ENCODE measurements at regions of chr6 and their contacts with region 1.

Region 1: DNA sequence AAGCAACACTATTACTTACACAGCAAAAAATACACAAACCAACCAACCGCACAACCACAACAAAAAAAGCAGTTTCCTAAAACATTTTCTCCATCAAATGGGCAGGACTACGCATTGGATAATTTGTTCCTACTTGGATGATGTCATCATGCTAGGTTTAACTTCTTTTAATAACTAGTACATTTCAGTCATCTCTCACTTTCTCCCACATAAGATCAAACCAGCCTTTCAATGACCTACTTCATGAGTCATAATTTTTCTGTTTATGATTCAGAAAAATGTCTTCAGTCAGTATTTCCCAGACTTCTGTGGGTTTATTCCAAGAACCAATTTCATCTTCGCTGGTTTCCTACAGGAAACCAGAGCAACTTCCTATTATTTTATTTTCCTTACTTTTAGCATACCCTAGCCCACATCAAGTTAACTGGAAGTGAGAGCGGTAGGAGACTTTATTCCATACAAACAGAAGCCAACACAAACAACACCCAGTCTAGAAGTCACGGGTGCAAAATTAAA is 134.2 kb downstream of the GMDS start:
- DNase-seq: no peak
- H3K4me3 ChIP-seq: peak overlapping the region in 1 of 2 donors; percentile 49
- H3K27ac ChIP-seq: peak overlapping the region; percentile 82 to 83
- H3K4me1 ChIP-seq: peaks cover 0 to 20% of the 10 kb centered on the region in 2 donors
- H3K27me3 ChIP-seq: no peaks in the 10 kb centered on the region
- CTCF ChIP-seq: no peak

Region 2: GRCh38 chr6:683742-684440 is 1427.3 kb before region 1 on chr6:
- intact Hi-C with region 1: no loop called
- DNase-seq: no peak
- H3K4me3 ChIP-seq: peak overlapping the region in 1 of 2 donors; percentile 38
- H3K27ac ChIP-seq: no peak overlapping the region
- H3K4me1 ChIP-seq: peaks cover 0 to 3% of the 10 kb centered on the region in 2 donors
- H3K27me3 ChIP-seq: no peaks in the 10 kb centered on the region
- CTCF ChIP-seq: no peak

Region 3: GRCh38 chr6:2147766-2148448 is 36.7 kb after region 1 on chr6:
- intact Hi-C with region 1: loop called (anchors 2 kb)
- DNase-seq: no peak
- H3K4me3 ChIP-seq: peak overlapping the region in 1 of 2 donors; percentile 27
- H3K27ac ChIP-seq: peak overlapping the region in 1 of 2 donors; percentile 3
- H3K4me1 ChIP-seq: peaks cover 0 to 12% of the 10 kb centered on the region in 2 donors
- H3K27me3 ChIP-seq: no peaks in the 10 kb centered on the region
- CTCF ChIP-seq: no peak

Region 4: GRCh38 chr6:2196079-2196679 is 85.0 kb after region 1 on chr6:
- intact Hi-C with region 1: loop called (anchors 5 kb)
- DNase-seq: no peak
- H3K4me3 ChIP-seq: no peak overlapping the region
- H3K27ac ChIP-seq: no peak overlapping the region
- H3K4me1 ChIP-seq: peaks cover 0 to 16% of the 10 kb centered on the region in 2 donors
- H3K27me3 ChIP-seq: no peaks in the 10 kb centered on the region
- CTCF ChIP-seq: peak; percentile 51 to 77 (median 75)

Region 5: DNA sequence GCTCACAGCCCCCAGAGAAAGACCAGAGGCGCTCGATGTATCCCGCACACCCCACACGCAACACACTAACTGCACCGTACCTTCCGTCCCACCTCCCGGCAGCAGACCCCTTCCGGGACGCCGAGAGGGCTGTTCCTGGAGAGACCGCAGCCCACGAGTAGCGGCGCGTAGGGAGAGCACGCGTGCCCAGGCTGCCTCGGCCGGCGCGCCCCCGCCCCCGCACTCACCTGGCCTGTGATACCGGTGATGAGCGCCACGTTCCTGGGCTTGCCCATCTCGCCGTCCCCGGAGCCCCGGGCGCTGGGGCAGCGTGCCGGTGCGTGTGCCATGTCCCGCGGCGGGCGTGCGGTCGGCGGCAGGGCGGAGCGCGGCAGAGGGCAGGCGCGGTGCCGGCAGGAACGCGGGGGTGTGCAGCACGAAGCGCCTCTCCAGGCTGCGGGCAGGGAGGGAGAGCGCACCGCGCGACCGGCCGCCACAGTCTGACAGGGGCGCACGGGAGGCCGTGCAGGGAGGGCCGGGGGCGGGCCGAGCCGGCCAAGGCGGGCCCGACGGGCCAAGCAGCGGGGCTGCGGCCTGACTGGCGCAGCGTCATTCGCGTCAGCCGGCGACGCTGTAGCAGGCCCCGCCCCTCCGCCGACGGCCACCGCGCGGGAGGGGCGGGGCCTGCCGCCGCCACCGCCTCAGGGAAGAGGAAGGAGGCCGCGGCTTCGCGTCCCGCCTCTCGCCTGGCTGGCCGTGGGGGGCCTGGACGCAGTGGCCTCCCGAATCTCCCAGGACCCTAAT is 134.1 kb after region 1 on chr6 and contains the start of gene GMDS:
- intact Hi-C with region 1: loop called (anchors 2 kb)
- DNase-seq: peak; percentile 56 to 93
- H3K4me3 ChIP-seq: peak within 1 kb of the TSS; percentile 86 to 95
- H3K27ac ChIP-seq: peak within 1 kb of the TSS; percentile 87 to 94
- H3K4me1 ChIP-seq: peaks cover 0 to 7% of the 10 kb centered on the region in 2 donors
- H3K27me3 ChIP-seq: no peaks in the 10 kb centered on the region
- CTCF ChIP-seq: no peak
- total RNA-seq, gene GMDS: 19.9 TPM

Measured in ascending aorta (tissue), 2 donors.